ENCODE measurements at regions of chr7 and their contacts with region 1.

Region 1: GRCh38 chr7:923108-924041 is 31.1 kb downstream of the ADAP1 start:
- DNase-seq: peak; percentile 72
- ATAC-seq: peak; percentile 85
- H3K4me3 Mint-ChIP-seq: peak overlapping the region; percentile 77
- H3K27ac Mint-ChIP-seq: peak overlapping the region; percentile 84
- H3K4me1 Mint-ChIP-seq: peaks cover 42% of the 10 kb centered on the region
- H3K27me3 Mint-ChIP-seq: no peaks in the 10 kb centered on the region
- CTCF ChIP-seq: no peak

Region 2: DNA sequence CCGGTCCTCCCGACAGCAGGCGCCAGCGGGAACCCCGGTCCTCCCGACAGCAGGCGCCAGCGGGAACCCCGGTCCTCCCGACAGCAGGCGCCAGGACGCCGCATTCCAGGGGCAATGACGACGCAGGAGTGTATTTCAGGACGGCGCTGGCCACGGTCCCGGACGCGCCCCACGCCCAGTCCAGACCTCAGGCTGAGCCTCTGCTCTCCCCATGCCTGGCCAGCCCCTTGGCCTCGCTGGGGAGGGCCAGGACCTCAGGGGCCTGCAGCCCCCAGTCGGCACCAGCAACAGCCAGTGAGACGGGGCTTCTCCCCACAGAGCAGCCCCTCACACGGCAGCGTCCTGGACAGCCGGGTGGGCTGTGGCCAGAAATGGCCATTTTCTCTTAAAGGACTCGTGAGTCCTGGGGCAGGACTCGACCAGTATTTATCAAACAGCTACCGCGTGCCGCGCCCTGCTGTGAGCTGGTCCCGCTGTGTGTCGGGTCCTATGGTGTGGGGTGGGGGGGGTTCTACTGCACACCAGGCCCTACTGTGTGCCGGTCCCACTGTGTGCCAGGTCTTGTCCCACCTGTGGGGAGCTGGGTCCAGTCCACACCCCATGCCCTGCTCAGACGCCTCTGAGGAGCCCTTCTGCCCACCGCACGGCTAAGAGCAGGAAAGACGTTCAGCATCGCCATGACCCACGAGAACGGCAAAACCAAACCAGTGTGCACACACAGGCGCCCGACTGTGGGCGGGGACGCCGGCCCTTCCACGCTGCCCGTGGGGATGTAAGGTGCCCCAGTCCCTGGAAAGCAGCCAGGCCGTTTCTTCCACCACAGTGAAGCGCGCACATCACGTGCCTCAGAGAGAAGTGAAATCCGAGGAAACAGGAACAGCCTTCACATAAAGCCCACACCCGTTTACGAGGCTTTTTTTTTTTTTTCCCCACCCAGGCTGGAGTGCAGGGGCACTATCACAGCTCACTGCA is 13.7 kb before region 1 on chr7:
- CTCF ChIA-PET with region 1: interaction called, 6 read pairs
- POLR2A ChIA-PET with region 1: interaction called, 14 read pairs
- intact Hi-C with region 1: loop called (anchors 1 kb)
- DNase-seq: peak; percentile 59
- ATAC-seq: peak; percentile 51
- H3K4me3 Mint-ChIP-seq: peak overlapping the region; percentile 74
- H3K27ac Mint-ChIP-seq: no peak overlapping the region
- H3K4me1 Mint-ChIP-seq: peaks cover 15% of the 10 kb centered on the region
- H3K27me3 Mint-ChIP-seq: peaks cover 2% of the 10 kb centered on the region
- CTCF ChIP-seq: no peak

Region 3: GRCh38 chr7:954330-955238 is 31.2 kb after region 1 on chr7 and contains the start of gene ADAP1:
- CTCF ChIA-PET with region 1: interaction called, 4 read pairs
- POLR2A ChIA-PET with region 1: interaction called, 4 read pairs
- intact Hi-C with region 1: loop called (anchors 1 kb)
- DNase-seq: peak; percentile 57
- ATAC-seq: peak; percentile 73
- H3K4me3 Mint-ChIP-seq: peak within 1 kb of the TSS; percentile 70
- H3K27ac Mint-ChIP-seq: no peak within 1 kb of the TSS
- H3K4me1 Mint-ChIP-seq: peaks cover 18% of the 10 kb centered on the region
- H3K27me3 Mint-ChIP-seq: peaks cover 10% of the 10 kb centered on the region
- CTCF ChIP-seq: no peak
- total RNA-seq, gene ADAP1: 9.4 and 11.9 TPM in 2 replicates

Region 4: DNA sequence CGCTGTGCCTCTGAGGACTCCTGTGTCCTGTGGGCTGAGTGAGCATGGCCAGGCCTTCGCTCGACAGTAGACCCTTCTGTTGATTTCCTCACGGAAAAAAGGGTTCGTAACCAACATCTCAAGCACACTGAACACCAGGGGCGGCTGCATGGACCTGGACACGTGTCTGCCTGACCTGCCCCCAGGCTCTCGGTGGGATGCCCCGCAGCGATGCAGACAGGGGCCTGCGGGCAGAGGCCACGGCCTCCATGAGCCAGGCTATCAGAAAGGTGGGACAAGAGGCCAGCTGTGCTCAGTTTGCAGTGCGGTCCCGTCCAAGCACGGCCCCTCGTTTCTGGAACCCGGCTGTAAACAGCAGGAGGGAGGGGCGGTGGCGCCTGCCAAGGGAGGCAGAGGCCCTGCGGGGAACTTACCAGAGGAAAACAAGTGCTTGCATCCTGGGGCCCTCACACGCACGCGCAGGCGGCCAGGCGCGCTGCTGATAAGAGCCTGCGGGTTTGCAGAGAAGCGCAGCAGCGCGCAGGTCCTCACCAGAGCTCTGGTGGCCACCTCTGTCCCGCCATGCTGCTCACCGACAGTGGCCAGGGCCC is 131.6 kb after region 1 on chr7:
- CTCF ChIA-PET with region 1: no interaction called
- POLR2A ChIA-PET with region 1: no interaction called
- intact Hi-C with region 1: no loop called
- DNase-seq: no peak
- ATAC-seq: peak; percentile 43
- H3K4me3 Mint-ChIP-seq: peak overlapping the region; percentile 69
- H3K27ac Mint-ChIP-seq: no peak overlapping the region
- H3K4me1 Mint-ChIP-seq: peaks cover 29% of the 10 kb centered on the region
- H3K27me3 Mint-ChIP-seq: peaks cover 9% of the 10 kb centered on the region
- CTCF ChIP-seq: no peak

Region 5: GRCh38 chr7:1144269-1144771 is 220.9 kb after region 1 on chr7:
- CTCF ChIA-PET with region 1: no interaction called
- POLR2A ChIA-PET with region 1: no interaction called
- intact Hi-C with region 1: loop called (anchors 5 kb)
- DNase-seq: no peak
- ATAC-seq: peak; percentile 43
- H3K4me3 Mint-ChIP-seq: peak overlapping the region; percentile 24
- H3K27ac Mint-ChIP-seq: peak overlapping the region; percentile 35
- H3K4me1 Mint-ChIP-seq: peaks cover 41% of the 10 kb centered on the region
- H3K27me3 Mint-ChIP-seq: no peaks in the 10 kb centered on the region
- CTCF ChIP-seq: no peak